ENCODE measurements at regions of chr10 and their contacts with region 1.

Region 1: DNA sequence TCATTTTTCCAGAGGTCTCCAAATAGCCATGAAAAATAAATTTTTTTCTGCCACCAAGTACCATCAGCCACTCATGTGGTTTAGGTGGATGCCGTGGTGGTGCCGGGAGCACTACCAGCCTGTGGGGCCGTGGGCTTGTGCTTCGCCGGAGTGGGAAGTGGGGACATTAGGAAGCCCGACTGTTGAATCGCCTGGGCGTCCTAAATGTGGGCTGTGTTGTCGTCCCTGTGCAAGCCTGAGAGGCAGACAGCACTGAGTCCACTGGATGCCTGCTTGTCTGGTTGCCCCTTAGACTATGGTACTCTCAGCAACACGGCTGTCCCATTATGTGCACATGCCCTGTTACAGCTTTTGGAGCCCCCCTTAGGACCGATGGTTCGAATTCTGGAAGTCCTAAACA is 59.9 kb downstream of the MGMT start:
- DNase-seq: no peak
- H3K4me3 ChIP-seq: no peak overlapping the region
- H3K27ac ChIP-seq: no peak overlapping the region
- H3K4me1 ChIP-seq: peaks cover 14% of the 10 kb centered on the region
- H3K27me3 ChIP-seq: no peaks in the 10 kb centered on the region
- CTCF ChIP-seq: no peak
- EP300 ChIP-seq: no peak
- POLR2A ChIP-seq: no peak

Region 2: GRCh38 chr10:129580010-129580409 is 53.1 kb after region 1 on chr10:
- intact Hi-C with region 1: loop called in 1 of 4 experiments (anchors 2 kb)
- DNase-seq: no peak
- H3K4me3 ChIP-seq: no peak overlapping the region
- H3K27ac ChIP-seq: no peak overlapping the region
- H3K4me1 ChIP-seq: no peaks in the 10 kb centered on the region
- H3K27me3 ChIP-seq: no peaks in the 10 kb centered on the region
- CTCF ChIP-seq: no peak
- EP300 ChIP-seq: no peak
- POLR2A ChIP-seq: no peak

Region 3: DNA sequence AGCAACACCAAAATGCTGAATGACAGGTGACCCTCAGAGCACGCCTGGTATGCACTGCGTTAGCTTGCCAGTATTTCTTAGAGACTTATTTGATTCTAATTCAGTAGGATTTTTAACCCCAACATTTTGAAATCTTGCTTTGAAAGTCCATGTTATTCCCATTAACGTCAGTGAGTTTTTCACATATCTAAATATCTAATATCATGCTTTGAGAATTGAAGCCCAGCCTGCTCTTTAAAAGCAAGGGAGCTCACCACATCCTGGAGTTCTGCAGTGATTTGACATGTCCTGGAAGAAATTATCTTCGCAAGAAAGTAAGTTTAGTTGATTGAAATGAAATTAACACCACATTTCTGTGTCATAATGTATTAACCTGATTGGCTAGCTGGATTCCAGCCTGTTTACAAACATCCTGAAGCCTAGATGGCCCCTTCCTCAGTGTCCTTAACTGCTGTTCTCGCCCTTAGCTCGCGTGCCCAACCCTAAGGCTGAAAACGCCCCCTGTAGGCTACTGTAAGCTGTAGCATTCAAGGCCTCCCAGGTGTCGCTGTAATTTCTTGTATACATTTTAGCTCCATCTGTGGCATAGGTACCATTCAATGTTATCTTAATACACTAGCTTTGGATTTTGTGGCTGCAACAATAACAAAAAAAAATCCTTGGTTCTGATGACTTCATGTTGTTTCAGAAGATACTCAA is 131.6 kb after region 1 on chr10:
- intact Hi-C with region 1: no loop called
- DNase-seq: no peak
- H3K4me3 ChIP-seq: no peak overlapping the region
- H3K27ac ChIP-seq: no peak overlapping the region
- H3K4me1 ChIP-seq: no peaks in the 10 kb centered on the region
- H3K27me3 ChIP-seq: no peaks in the 10 kb centered on the region
- CTCF ChIP-seq: no peak
- EP300 ChIP-seq: no peak
- POLR2A ChIP-seq: no peak